ENCODE measurements at regions of chr14 and their contacts with region 1.

Region 1: DNA sequence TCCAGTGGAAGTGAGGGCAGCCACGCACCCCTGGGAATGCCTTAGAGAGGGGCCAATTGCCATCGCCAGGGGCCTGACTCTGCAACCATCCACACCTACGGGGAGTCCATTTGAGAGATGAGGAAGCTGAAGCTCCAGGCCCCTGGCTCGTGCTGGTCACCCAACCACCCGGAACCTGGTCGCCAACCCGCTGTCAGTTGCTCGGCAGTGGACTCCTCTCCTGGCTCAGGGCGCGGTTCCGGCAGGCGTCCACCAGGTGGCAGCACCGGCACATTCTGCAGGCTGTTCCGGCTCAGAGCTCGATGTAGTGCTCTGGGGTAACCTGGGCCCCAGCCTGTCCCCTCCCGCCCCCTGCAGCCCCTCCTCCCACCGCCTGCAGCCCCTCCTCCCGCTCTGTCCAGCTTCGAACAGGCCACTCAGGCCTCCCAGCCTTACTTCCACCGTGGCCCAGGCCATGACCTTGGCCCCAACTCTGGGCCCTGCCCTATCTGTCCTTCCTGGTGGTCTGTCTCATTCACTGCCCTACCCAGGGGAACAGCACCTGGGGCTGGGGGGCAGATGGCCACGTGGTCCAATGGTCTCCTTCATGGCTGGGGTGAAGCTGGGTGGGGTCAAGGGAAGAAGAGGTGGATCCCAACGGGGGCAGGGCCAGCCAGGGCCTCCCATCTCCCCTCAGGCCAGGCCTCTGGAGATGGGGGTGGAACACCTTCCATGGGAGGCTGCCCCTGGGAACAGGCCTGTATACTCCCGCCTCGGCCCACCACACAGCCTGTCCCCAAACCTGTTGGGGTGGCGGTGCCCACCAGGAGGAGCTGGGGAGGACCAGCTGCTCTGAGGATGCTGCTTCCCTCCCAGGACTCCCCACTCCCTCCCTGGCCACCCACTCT is 15.7 kb downstream of the SIVA1 start:
- DNase-seq: peak; percentile 94
- ATAC-seq: peak; percentile 95
- H3K4me3 Mint-ChIP-seq: no peak overlapping the region
- H3K27ac Mint-ChIP-seq: peak overlapping the region; percentile 46
- H3K4me1 Mint-ChIP-seq: peaks cover 5% of the 10 kb centered on the region
- H3K27me3 Mint-ChIP-seq: no peaks in the 10 kb centered on the region

Region 2: GRCh38 chr14:104665657-104666522 is 102.8 kb before region 1 on chr14:
- CTCF ChIA-PET with region 1: no interaction called
- DNase-seq: peak; percentile 64
- ATAC-seq: peak; percentile 83
- H3K4me3 Mint-ChIP-seq: no peak overlapping the region
- H3K27ac Mint-ChIP-seq: no peak overlapping the region
- H3K4me1 Mint-ChIP-seq: peaks cover 15% of the 10 kb centered on the region
- H3K27me3 Mint-ChIP-seq: peaks cover 49% of the 10 kb centered on the region

Region 3: GRCh38 chr14:104752735-104753531 is 15.7 kb before region 1 on chr14 and contains the start of gene SIVA1:
- CTCF ChIA-PET with region 1: interaction called, 76 read pairs
- DNase-seq: peak; percentile 100
- ATAC-seq: peak; percentile 94
- H3K4me3 Mint-ChIP-seq: peak within 1 kb of the TSS; percentile 87
- H3K27ac Mint-ChIP-seq: peak within 1 kb of the TSS; percentile 89
- H3K4me1 Mint-ChIP-seq: peaks cover 45% of the 10 kb centered on the region
- H3K27me3 Mint-ChIP-seq: no peaks in the 10 kb centered on the region
- total RNA-seq, gene SIVA1: 127 to 140 TPM

Region 4: GRCh38 chr14:104794641-104795467 is 26.2 kb after region 1 on chr14:
- CTCF ChIA-PET with region 1: interaction called, 12 read pairs
- DNase-seq: peak; percentile 56
- ATAC-seq: peak; percentile 68
- H3K4me3 Mint-ChIP-seq: peak overlapping the region; percentile 88
- H3K27ac Mint-ChIP-seq: peak overlapping the region; percentile 86
- H3K4me1 Mint-ChIP-seq: peaks cover 31% of the 10 kb centered on the region
- H3K27me3 Mint-ChIP-seq: peaks cover 6% of the 10 kb centered on the region

Region 5: DNA sequence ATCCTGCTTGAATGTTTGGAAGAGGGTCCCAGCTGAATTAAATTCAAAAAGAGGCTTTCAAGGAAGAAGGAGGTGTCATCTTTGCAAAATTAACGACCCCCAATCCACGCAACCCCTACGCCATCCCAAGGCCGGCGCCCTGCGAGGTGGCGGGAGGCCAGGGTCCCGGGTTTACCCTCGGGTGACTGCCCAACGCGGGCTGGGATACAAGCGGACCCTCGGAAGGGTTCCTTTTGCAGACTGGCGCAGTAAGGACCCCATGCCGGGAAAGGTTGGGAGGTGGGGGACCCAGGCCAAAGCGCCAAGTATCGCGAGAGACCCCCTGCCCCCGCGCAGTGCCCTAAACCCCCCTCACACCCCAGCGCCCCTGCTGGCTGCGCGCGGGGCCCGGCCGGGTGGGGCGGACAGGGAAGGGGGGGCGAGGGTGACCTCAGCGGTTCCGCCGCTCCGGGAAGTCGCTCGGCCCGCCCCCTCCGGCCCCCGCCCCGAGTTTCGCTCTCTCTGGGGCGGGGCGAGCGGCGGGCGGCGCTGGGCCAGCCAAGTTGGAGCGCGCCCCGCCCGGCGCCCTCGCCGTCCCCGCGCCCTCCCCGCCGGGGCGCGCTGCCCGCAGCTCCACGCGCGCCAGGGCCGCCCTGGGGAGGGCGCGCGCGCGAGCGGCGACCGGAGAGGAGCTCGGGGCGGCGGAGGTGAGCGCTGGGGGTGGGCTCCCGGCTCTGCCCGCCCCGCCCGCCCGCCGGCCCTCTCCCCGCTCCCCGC is 31.5 kb after region 1 on chr14:
- CTCF ChIA-PET with region 1: interaction called, 12 read pairs
- DNase-seq: peak; percentile 86
- ATAC-seq: peak; percentile 73
- H3K4me3 Mint-ChIP-seq: peak overlapping the region; percentile 39
- H3K27ac Mint-ChIP-seq: peak overlapping the region; percentile 42
- H3K4me1 Mint-ChIP-seq: peaks cover 23% of the 10 kb centered on the region
- H3K27me3 Mint-ChIP-seq: peaks cover 6% of the 10 kb centered on the region

Region 6: DNA sequence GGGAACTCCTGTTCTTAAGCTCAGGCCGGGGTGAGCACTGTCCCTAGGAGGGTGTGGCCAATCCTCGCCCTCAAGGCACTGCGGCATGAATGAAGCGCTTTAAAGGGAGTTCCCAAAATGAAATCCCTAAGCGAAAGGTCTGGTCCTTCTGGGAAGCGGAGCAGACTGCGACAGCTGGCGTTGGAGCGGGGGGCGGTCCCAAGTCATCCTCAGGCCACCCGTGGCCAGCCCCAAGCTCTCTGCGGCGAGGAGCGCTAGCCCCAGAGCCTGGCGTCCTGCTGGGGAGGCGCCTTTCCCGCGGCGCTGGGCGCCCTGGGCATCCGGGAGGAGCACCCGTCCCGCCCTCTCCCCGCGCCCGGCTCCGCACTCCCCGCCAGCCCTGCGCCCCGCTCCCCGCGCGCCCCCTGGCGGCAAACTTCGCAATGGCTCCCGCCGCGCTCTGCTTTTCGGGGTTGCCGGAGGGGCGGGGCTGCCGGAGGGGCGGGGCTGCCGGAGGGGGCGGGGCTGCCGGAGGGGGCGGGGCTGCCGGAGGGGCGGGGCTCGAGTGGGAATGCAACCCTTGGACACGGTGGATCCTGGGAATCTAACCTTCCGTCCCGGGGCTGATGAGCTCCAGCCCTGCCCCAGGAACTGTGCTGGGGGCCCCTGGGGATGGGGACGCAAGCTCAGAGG is 57.6 kb after region 1 on chr14:
- CTCF ChIA-PET with region 1: interaction called, 124 read pairs
- DNase-seq: peak; percentile 94
- ATAC-seq: peak; percentile 95
- H3K4me3 Mint-ChIP-seq: peak overlapping the region; percentile 57
- H3K27ac Mint-ChIP-seq: no peak overlapping the region
- H3K4me1 Mint-ChIP-seq: peaks cover 14% of the 10 kb centered on the region
- H3K27me3 Mint-ChIP-seq: peaks cover 29% of the 10 kb centered on the region